Lower leg skin (tissue), 4 donors: ENCODE measurements at regions of chr9 and their contacts with region 1.

Region 1: GRCh38 chr9:124133727-124134126 is 122.2 kb downstream of the LHX2 start:
- DNase-seq: peak in 1 of 2 donors; percentile 77
- H3K4me3 ChIP-seq: no peak overlapping the region
- CTCF ChIP-seq: no peak
- POLR2A ChIP-seq: no peak

Region 2: GRCh38 chr9:124320062-124320973 is 186.6 kb after region 1 on chr9:
- intact Hi-C with region 1: loop called (anchors 10 kb)
- DNase-seq: peak; percentile 54 to 93
- H3K4me3 ChIP-seq: no peak overlapping the region
- CTCF ChIP-seq: peak in 1 of 3 donors; percentile 75
- POLR2A ChIP-seq: no peak